Heart left ventricle (tissue), 16 donors: ENCODE measurements at regions of chr9 and their contacts with region 1.

Region 1: GRCh38 chr9:16640649-16641048 is 229.8 kb downstream of the BNC2 start:
- DNase-seq: no peak
- ATAC-seq: no peak
- H3K4me3 ChIP-seq: no peak overlapping the region
- H3K27ac ChIP-seq: no peak overlapping the region
- H3K4me1 ChIP-seq: no peaks in the 10 kb centered on the region
- H3K27me3 ChIP-seq: no peaks in the 10 kb centered on the region
- CTCF ChIP-seq: no peak
- POLR2A ChIP-seq: no peak

Region 2: GRCh38 chr9:17453751-17454150 is 813.1 kb after region 1 on chr9:
- intact Hi-C with region 1: loop called in 1 of 10 experiments (anchors 10 kb)
- DNase-seq: no peak
- ATAC-seq: no peak
- H3K4me3 ChIP-seq: no peak overlapping the region
- H3K27ac ChIP-seq: no peak overlapping the region
- H3K4me1 ChIP-seq: no peaks in the 10 kb centered on the region
- H3K27me3 ChIP-seq: no peaks in the 10 kb centered on the region
- CTCF ChIP-seq: no peak
- POLR2A ChIP-seq: no peak